HepG2 (cell line): ENCODE measurements at regions of chr19 and their contacts with region 1.

Region 1: DNA sequence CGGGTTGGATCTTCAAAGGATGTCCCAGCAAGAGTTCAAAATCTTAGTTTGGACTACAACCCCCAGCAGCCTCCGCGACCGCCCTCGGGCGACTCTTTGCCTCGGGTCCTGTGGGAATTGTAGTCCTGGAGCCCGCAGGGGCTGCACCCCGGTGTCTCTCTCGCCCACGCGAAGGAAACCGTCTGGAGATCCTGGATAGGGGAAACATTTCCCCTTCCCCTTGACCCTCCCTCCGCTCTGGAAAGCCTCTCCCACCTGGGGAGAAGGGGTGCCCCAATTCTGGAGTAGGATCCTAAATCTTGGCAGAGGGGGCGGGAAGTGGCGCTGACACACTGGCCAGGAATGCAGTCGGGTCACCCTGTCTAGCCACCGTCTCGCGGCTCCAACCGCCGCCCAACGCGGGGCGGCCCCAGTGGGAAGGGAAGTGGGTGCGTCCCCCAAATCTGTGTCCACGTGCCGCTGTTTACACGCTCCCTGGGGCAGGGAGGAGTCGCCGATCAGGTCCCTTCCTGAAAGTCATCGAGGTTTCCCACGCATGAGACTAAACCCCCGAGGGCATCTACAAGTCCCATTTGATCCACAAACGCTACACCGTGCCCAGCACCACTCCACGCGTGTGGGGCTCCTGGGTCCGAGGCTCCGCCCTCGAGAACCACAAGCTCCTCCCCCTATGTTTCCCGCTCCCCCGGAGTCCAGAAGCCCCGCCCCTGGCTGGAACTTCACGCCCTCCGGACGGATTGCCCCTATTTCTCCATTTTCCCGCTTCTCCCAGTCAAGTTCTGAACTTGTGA is 761 bp upstream of the PPP1R13L start:
- DNase-seq: peak; percentile 81
- ATAC-seq: peak; percentile 81
- H3K4me3 ChIP-seq: peak overlapping the region; percentile 75 to 84 (median 84)
- H3K27ac ChIP-seq: peak overlapping the region; percentile 92
- H3K4me1 ChIP-seq: peaks cover 29% of the 10 kb centered on the region
- H3K27me3 ChIP-seq: no peaks in the 10 kb centered on the region; a peak in 1 of 5 replicates
- CTCF ChIP-seq: no peak
- EP300 ChIP-seq: 0 out of 4 replicates have a peak, but pooled peaks of 1 of the 2 experiments have one; percentile 3
- POLR2A ChIP-seq: peak; percentile 48 to 76; a peak in 2 of 4 replicates
- RAD21 ChIP-seq: 0 out of 2 replicates have a peak, but pooled peaks have one; percentile 4

Region 2: DNA sequence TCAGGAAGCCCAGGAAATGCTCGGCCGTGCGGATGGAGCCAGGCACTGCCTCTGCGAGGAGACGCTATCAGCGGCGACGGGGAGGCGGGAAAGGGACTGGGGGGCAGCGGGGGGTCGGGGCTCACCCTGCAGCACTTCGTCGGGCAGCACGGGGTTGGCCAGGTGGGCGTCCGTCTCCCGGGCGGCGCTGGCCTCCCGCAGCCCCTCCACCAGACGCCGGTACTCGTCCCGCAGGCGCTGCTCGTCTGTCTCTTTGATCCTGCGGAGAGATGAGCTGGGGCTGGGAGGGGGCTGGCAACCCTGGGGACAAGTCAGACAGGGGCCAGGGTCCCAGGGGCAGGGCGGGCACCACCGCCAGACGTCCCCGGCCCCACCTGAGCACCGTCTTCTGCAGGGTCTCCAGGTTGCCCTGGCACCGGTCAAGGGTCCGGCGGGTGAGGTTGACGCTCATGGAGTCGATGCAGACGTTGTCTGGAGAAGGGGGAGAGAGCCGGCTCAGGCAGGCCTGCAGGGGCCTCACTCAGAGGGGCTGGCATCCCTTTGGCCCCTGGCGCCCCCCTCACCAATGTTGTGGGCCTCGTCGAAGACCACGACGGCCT is 41.7 kb before region 1 on chr19:
- CTCF ChIA-PET with region 1: no interaction called
- POLR2A ChIA-PET with region 1: no interaction called
- in situ Hi-C with region 1: no loop called
- intact Hi-C with region 1: no loop called
- DNase-seq: no peak
- ATAC-seq: no peak
- H3K4me3 ChIP-seq: no peak overlapping the region
- H3K27ac ChIP-seq: no peak overlapping the region
- H3K4me1 ChIP-seq: peaks cover 10% of the 10 kb centered on the region
- H3K27me3 ChIP-seq: no peaks in the 10 kb centered on the region
- CTCF ChIP-seq: no peak
- EP300 ChIP-seq: no peak
- POLR2A ChIP-seq: no peak
- RAD21 ChIP-seq: no peak

Region 3: GRCh38 chr19:45478454-45479238 is 73.0 kb after region 1 on chr19:
- CTCF ChIA-PET with region 1: interaction called, 19 read pairs
- POLR2A ChIA-PET with region 1: interaction called, 10 read pairs
- in situ Hi-C with region 1: no loop called
- intact Hi-C with region 1: no loop called
- DNase-seq: peak; percentile 91
- ATAC-seq: peak; percentile 88
- H3K4me3 ChIP-seq: peak overlapping the region; percentile 60 to 70 (median 66)
- H3K27ac ChIP-seq: peak overlapping the region; percentile 90
- H3K4me1 ChIP-seq: peaks cover 36% of the 10 kb centered on the region
- H3K27me3 ChIP-seq: peaks cover 0 to 16% of the 10 kb centered on the region in 2 experiments; a peak in 2 of 5 replicates
- CTCF ChIP-seq: peak; percentile 93
- EP300 ChIP-seq: peak in 1 of 2 experiments; percentile 13; a peak in 1 of 4 replicates
- POLR2A ChIP-seq: 0 out of 4 replicates have a peak, but pooled peaks of 1 of the 2 experiments have one; percentile 38
- RAD21 ChIP-seq: peak; percentile 92

Region 4: DNA sequence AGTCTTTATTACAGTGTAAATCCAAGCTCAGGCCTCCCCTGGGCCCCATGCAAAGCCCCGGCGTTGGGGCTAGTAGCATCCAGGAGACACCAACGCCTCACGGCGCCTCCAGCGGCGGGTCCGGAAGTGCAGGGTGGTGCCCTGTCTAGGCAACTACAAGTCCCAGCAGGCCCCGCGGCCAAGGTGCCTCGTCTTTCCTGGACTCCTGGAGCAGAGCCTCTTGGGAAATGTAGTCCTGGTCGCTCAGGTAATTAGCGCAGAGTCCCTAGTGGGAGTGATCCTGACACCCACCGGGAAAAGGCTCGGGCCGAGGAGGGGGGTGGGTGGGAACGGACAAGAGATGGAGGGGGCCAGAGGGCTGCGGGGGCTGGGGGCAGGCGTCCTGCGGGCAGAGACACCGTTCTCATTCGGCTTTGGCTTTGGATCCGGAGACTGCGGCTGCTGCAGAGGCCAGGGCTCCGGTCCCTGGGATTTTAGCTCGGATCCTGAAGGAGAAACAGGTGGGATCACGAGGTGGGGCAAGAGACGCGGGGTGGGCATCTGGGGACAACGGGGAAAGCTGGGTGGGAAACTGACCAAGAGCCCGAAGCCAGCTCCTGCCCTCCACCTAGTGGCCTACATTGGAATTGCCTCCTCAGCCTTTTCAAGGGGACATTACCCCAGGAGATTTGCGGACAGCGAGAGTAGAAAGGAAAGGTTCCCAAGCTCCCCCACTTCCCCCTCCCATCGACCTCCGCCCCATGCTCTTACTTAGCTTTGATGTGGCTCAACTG is 79.9 kb after region 1 on chr19:
- CTCF ChIA-PET with region 1: interaction called, 12 read pairs
- POLR2A ChIA-PET with region 1: no interaction called
- in situ Hi-C with region 1: no loop called
- intact Hi-C with region 1: no loop called
- DNase-seq: peak; percentile 93
- ATAC-seq: peak; percentile 97
- H3K4me3 ChIP-seq: peak overlapping the region; percentile 66 to 88 (median 76)
- H3K27ac ChIP-seq: peak overlapping the region; percentile 36
- H3K4me1 ChIP-seq: peaks cover 25% of the 10 kb centered on the region
- H3K27me3 ChIP-seq: peaks cover 0 to 6% of the 10 kb centered on the region in 2 experiments; a peak in 2 of 5 replicates
- CTCF ChIP-seq: peak; percentile 89
- EP300 ChIP-seq: peak in 1 of 2 experiments; percentile 4; a peak in 1 of 4 replicates
- POLR2A ChIP-seq: no peak
- RAD21 ChIP-seq: peak; percentile 29; the same call in 1 of the 2 replicates

Region 5: GRCh38 chr19:45746866-45747265 is 341.2 kb after region 1 on chr19:
- CTCF ChIA-PET with region 1: no interaction called
- POLR2A ChIA-PET with region 1: no interaction called
- in situ Hi-C with region 1: no loop called
- intact Hi-C with region 1: no loop called
- DNase-seq: no peak
- ATAC-seq: no peak
- H3K4me3 ChIP-seq: no peak overlapping the region
- H3K27ac ChIP-seq: no peak overlapping the region
- H3K4me1 ChIP-seq: peaks cover 30% of the 10 kb centered on the region
- H3K27me3 ChIP-seq: peaks cover 0 to 32% of the 10 kb centered on the region in 2 experiments; a peak in 2 of 5 replicates
- CTCF ChIP-seq: no peak
- EP300 ChIP-seq: no peak
- POLR2A ChIP-seq: no peak
- RAD21 ChIP-seq: no peak